Gastrocnemius medialis (tissue), 4 donors: ENCODE measurements at regions of chr12 and their contacts with region 1.

Region 1: DNA sequence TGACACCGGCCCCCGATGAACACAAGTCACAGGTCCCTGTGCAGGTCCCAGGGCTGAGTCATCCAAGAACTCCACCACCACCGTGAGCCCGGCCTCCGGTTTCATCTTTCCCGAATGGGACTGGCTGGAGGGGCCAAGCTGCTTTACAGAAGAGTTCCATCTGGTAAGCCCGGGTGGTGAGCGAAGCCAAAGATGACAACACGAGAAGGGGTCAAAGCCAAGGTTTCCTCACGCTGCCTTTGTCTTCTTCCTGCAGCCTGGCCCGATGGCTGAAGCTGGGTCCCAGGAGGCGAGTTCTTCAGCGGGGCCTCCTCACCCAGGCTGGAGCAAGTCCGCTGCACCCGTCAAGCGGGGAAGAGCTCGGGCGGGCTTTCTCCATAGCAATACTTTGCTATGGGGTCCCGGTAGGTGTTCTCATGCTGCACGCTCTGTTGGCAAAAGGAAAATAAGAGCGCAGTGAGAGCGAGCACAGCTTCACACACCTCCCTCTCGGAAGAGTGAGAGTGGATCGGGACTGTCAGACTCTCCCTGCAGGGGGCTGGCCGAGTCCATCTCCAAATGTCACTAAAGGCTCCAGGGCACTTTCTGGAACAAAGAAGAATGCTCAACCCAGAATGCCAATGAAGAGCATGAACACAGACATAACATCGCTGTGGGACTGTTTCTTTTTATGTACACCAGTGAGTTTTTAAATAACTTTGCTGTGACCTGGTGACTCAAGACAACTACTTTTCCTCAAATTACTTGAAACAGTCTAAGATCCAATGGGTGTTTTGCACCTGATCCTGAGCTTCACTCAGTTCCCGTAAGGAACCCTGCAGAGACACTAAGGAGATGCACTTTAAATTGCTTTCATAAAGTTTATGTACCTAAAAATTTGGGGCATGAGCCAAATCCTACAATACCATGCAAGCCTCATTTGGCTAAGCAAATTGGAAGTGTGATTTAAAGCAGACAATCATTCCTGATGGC is 20.1 kb downstream of the SPRING1 start:
- DNase-seq: peak; percentile 87 to 94
- ATAC-seq: peak; percentile 96 to 98
- H3K4me3 ChIP-seq: peak overlapping the region; percentile 34 to 55 (median 36)
- H3K27ac ChIP-seq: peak overlapping the region; percentile 75 to 82 (median 80)
- H3K4me1 ChIP-seq: peaks cover 41 to 42% of the 10 kb centered on the region in 2 donors
- H3K27me3 ChIP-seq: no peaks in the 10 kb centered on the region
- CTCF ChIP-seq: no peak
- POLR2A ChIP-seq: peak in 1 of 2 donors; percentile 49

Region 2: DNA sequence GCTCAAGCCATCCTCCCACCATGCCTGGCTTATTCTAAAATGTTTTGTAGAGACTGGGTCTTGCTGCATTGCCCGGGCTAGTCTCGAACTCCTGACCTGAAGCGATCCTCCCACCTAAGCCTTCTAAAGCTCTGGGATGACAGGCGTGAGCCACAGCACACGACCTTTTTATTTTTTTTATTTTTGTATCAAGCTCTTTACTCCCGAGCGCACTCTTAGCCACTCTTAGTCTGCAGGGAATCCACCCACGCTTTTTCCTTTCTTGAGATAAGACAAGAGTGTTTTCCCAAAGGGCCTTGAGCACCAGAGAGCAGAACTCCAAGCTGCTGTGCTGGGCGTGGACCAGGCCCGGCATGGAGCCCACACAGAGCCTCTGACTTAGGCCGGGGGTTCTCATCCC is 135.1 kb before region 1 on chr12:
- in situ Hi-C with region 1: no loop called
- intact Hi-C with region 1: no loop called
- DNase-seq: no peak
- ATAC-seq: no peak
- H3K4me3 ChIP-seq: no peak overlapping the region
- H3K27ac ChIP-seq: no peak overlapping the region
- H3K4me1 ChIP-seq: no peaks in the 10 kb centered on the region
- H3K27me3 ChIP-seq: no peaks in the 10 kb centered on the region
- CTCF ChIP-seq: no peak
- POLR2A ChIP-seq: no peak

Region 3: GRCh38 chr12:116737774-116738700 is 20.3 kb after region 1 on chr12 and contains the starts of genes RNFT2 and SPRING1:
- in situ Hi-C with region 1: no loop called
- intact Hi-C with region 1: loop called (anchors 1 kb)
- DNase-seq: peak; percentile 99
- ATAC-seq: peak; percentile 100
- H3K4me3 ChIP-seq: peak within 1 kb of the TSS; percentile 60 to 92 (median 80)
- H3K27ac ChIP-seq: peak within 1 kb of the TSS; percentile 56 to 84 (median 76)
- H3K4me1 ChIP-seq: peaks cover 11 to 18% of the 10 kb centered on the region in 2 donors
- H3K27me3 ChIP-seq: no peaks in the 10 kb centered on the region
- CTCF ChIP-seq: peak in 1 of 5 experiments; percentile 22
- POLR2A ChIP-seq: peak; percentile 96 to 97
- total RNA-seq, gene RNFT2: 0.55 TPM in 1 of 4 donors, not detected in the others
- total RNA-seq, gene SPRING1: 3.5 to 11.0 (median 8.2) TPM

Region 4: GRCh38 chr12:116818948-116819832 is 101.4 kb after region 1 on chr12:
- in situ Hi-C with region 1: no loop called
- intact Hi-C with region 1: loop called (anchors 2 kb)
- DNase-seq: peak; percentile 78 to 89
- ATAC-seq: peak; percentile 91 to 94
- H3K4me3 ChIP-seq: peak overlapping the region; percentile 63 to 87 (median 76)
- H3K27ac ChIP-seq: peak overlapping the region; percentile 83 to 95 (median 92)
- H3K4me1 ChIP-seq: peaks cover 10 to 13% of the 10 kb centered on the region in 2 donors
- H3K27me3 ChIP-seq: no peaks in the 10 kb centered on the region
- CTCF ChIP-seq: peak in 4 of 5 experiments; percentile 5 to 35 (median 22)
- POLR2A ChIP-seq: peak; percentile 53 to 61

Region 5: GRCh38 chr12:116955382-116956021 is 237.8 kb after region 1 on chr12:
- in situ Hi-C with region 1: loop called in 2 of 4 experiments (anchors 25 kb)
- intact Hi-C with region 1: loop called (anchors 5 kb)
- DNase-seq: peak in 1 of 2 donors; percentile 33
- ATAC-seq: peak; percentile 84 to 96
- H3K4me3 ChIP-seq: no peak overlapping the region
- H3K27ac ChIP-seq: no peak overlapping the region
- H3K4me1 ChIP-seq: peaks cover 6 to 25% of the 10 kb centered on the region in 2 donors
- H3K27me3 ChIP-seq: no peaks in the 10 kb centered on the region
- CTCF ChIP-seq: peak in 2 of 5 experiments; percentile 8 to 32
- POLR2A ChIP-seq: no peak

Region 6: DNA sequence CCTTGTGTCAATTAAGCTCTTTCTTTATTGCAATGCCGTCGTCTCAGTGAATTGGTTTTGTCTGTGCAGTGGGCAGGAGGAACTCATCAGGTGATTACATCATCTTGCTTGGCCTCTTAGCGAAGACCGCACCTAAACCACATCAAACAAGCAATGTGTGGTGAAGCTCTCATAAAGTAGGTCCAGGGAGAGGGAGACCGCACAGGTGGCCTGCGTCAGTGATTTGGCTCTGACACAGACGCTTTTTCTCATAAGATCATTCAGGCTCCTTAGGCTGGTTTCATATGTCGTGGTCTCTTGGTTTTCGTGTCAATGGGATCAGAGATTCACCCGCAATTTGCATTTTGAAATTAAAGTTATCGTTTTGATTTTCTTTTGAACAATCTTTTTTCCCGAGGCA is 388.1 kb after region 1 on chr12:
- in situ Hi-C with region 1: no loop called
- intact Hi-C with region 1: no loop called
- DNase-seq: no peak
- ATAC-seq: no peak
- H3K4me3 ChIP-seq: no peak overlapping the region
- H3K27ac ChIP-seq: no peak overlapping the region
- H3K4me1 ChIP-seq: no peaks in the 10 kb centered on the region
- H3K27me3 ChIP-seq: peaks cover 6 to 15% (median 10%) of the 10 kb centered on the region in 3 donors
- CTCF ChIP-seq: no peak
- POLR2A ChIP-seq: no peak